Heart left ventricle (tissue), 16 donors: ENCODE measurements at regions of chr13 and their contacts with region 1.

Region 1: GRCh38 chr13:28337166-28338005 is 157.5 kb downstream of the FLT1 start:
- DNase-seq: peak in 1 of 5 donors; percentile 29
- ATAC-seq: peak; percentile 21 to 61 (median 42)
- H3K4me3 ChIP-seq: no peak overlapping the region
- H3K27ac ChIP-seq: peak overlapping the region; percentile 12 to 69 (median 60)
- H3K4me1 ChIP-seq: peaks cover 10 to 65% (median 37%) of the 10 kb centered on the region in 12 donors
- H3K27me3 ChIP-seq: peaks cover 0 to 9% (median 0%) of the 10 kb centered on the region in 9 donors
- CTCF ChIP-seq: no peak
- POLR2A ChIP-seq: no peak

Region 2: GRCh38 chr13:26575244-26575643 is 1762.1 kb before region 1 on chr13:
- intact Hi-C with region 1: no loop called
- DNase-seq: no peak
- ATAC-seq: no peak
- H3K4me3 ChIP-seq: no peak overlapping the region
- H3K27ac ChIP-seq: no peak overlapping the region
- H3K4me1 ChIP-seq: no peaks in the 10 kb centered on the region
- H3K27me3 ChIP-seq: no peaks in the 10 kb centered on the region
- CTCF ChIP-seq: no peak
- POLR2A ChIP-seq: no peak

Region 3: GRCh38 chr13:28408235-28408848 is 71.0 kb after region 1 on chr13:
- intact Hi-C with region 1: loop called in 1 of 10 experiments (anchors 5 kb)
- DNase-seq: peak; percentile 72 to 84 (median 79)
- ATAC-seq: peak; percentile 84 to 96 (median 90)
- H3K4me3 ChIP-seq: no peak overlapping the region
- H3K27ac ChIP-seq: peak overlapping the region; percentile 19 to 84 (median 62)
- H3K4me1 ChIP-seq: peaks cover 0 to 67% (median 32%) of the 10 kb centered on the region in 12 donors
- H3K27me3 ChIP-seq: no peaks in the 10 kb centered on the region
- CTCF ChIP-seq: peak in 3 of 12 donors; percentile 14 to 24 (median 23)
- POLR2A ChIP-seq: no peak